Activated T-helper 1 cell treated with anti-CD3 and anti-CD28 coated beads, Interleukin-12 subunit alpha, Interleukin-12 subunit beta, Interleukin-2, Interleukin-4 antibody, amounts not matched to agents 30 ng/mL and 10 ng/mL and 1 ng/mL, durations not matched to agents 14 hours and 24 hours and 36 hours (primary cell): ENCODE measurements at regions of chr10 and their contacts with region 1.

Region 1: DNA sequence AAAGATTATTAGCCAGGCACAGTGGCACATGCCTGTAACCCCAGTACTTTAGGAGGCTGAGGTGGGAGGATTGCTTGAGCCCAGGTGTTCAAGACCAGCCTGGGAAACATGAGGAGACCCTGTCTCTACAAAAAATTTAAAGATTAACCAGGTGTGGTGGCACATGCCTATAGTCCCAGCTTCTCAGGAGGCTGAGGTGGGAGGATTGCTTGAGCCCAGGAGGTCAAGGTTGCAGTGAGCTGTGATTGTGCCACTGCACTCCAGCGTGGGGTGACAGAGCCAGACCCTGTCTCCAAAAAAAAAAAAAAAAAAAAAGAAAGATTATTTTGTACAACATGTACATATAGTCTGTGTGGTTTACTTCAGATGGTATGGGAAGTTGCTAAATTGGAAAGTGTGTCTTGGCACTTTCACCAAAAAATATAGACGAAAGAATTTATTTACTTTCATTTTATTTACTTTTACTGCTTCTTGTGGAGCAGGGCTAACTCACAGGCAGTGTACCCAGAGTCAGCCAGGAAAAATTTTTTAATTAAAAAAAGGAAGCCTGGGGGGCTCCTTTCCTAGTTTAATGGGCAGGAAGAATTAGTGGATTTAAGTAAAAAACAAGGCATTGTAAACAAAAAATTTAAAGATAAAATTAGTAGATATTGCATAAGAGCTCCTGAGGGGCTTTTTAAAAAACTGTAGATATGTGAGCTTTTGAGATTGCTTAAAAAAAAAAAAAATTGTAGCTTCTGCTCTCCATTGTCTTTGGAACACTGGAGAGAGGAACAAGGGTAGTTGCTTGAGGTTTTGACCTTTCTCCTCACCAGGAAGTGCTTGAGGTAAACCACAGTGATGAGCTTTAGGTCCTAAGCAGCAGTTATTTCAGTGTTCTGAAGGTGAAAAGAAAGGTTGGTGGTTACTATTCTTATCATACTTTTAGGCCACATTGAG is 44.6 kb upstream of the VDAC2 start:
- DNase-seq: peak; percentile 20
- H3K4me3 Mint-ChIP-seq: peak overlapping the region; percentile 72
- H3K27ac Mint-ChIP-seq: peak overlapping the region; percentile 86
- H3K4me1 Mint-ChIP-seq: peaks cover 25% of the 10 kb centered on the region
- H3K27me3 Mint-ChIP-seq: no peaks in the 10 kb centered on the region

Region 2: DNA sequence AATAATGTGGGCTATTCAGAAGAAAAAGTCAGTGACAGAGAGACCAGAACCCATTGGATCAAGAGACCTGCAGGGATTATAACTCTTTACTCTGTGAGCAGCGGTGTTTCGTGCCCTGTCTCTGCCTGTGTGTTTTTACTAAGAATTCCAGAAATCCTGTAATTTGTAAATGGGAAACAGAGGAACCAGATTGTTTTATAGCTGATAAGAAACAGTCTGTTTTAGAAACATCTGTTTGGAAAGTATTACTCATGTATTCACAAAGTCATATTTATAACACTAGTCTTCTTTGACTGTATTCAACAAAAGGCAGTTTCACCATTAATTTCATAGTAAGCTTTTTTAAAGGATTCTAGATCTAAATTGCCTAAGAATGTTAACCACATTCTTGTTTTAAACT is 14.6 kb after region 1 on chr10:
- intact Hi-C with region 1: loop called (anchors 2 kb)
- DNase-seq: no peak
- H3K4me3 Mint-ChIP-seq: no peak overlapping the region
- H3K27ac Mint-ChIP-seq: no peak overlapping the region
- H3K4me1 Mint-ChIP-seq: peaks cover 37% of the 10 kb centered on the region
- H3K27me3 Mint-ChIP-seq: no peaks in the 10 kb centered on the region